Ovary (tissue), 10 donors: ENCODE measurements at regions of chr10 and their contacts with region 1.

Region 1: GRCh38 chr10:115092555-115093285 is 445 bp upstream of the ATRNL1 start:
- DNase-seq: peak in 4 of 5 donors; percentile 60 to 82 (median 75)
- H3K4me3 ChIP-seq: peak overlapping the region; percentile 76
- H3K27ac ChIP-seq: peak overlapping the region; percentile 88 to 99
- H3K4me1 ChIP-seq: no peaks in the 10 kb centered on the region
- H3K27me3 ChIP-seq: no peaks in the 10 kb centered on the region
- CTCF ChIP-seq: no peak
- EP300 ChIP-seq: no peak
- POLR2A ChIP-seq: no peak

Region 2: GRCh38 chr10:114584419-114584818 is 508.3 kb before region 1 on chr10:
- intact Hi-C with region 1: no loop called
- DNase-seq: no peak
- H3K4me3 ChIP-seq: no peak overlapping the region
- H3K27ac ChIP-seq: no peak overlapping the region
- H3K4me1 ChIP-seq: no peaks in the 10 kb centered on the region
- H3K27me3 ChIP-seq: no peaks in the 10 kb centered on the region
- CTCF ChIP-seq: no peak
- EP300 ChIP-seq: no peak
- POLR2A ChIP-seq: no peak

Region 3: DNA sequence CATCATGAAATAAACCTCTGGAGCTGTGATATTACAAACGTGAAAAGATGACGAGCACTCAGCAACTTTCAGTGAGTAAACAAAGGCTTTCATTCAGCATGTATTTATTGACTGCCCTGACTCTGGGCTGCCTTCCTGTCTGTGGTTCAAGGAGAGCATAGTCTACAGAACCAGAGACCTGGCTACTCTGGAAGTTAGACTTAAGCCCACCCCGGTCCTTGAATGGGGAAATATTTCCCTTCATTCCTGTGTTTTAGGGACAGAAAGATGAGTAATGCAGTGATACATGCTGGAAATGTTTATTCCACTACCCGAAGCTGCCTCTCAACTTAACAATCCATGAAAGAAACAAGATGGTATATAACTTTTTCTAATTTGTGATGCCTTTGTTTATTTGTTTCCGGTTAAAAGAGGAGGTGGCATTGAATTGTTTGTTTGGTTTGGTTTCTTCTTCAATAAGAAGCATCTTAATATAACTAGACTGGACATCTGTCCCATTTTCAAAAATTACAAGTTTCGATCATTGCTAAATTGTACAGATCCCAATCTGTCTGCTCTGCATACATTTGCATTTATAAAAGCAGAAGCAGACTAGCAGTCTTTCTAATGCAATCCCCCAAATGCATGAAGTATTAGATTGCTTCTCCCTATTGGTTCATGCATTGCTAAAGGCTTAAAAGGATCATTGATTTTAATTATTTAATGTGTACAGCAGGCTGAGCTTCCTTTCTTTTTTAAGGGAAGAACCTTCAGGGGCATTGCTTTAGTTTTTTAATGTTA is 97.1 kb before region 1 on chr10:
- intact Hi-C with region 1: loop called in 1 of 4 experiments (anchors 10 kb)
- DNase-seq: no peak
- H3K4me3 ChIP-seq: no peak overlapping the region
- H3K27ac ChIP-seq: no peak overlapping the region
- H3K4me1 ChIP-seq: peaks cover 2% of the 10 kb centered on the region
- H3K27me3 ChIP-seq: no peaks in the 10 kb centered on the region
- CTCF ChIP-seq: no peak
- EP300 ChIP-seq: no peak
- POLR2A ChIP-seq: no peak

Region 4: DNA sequence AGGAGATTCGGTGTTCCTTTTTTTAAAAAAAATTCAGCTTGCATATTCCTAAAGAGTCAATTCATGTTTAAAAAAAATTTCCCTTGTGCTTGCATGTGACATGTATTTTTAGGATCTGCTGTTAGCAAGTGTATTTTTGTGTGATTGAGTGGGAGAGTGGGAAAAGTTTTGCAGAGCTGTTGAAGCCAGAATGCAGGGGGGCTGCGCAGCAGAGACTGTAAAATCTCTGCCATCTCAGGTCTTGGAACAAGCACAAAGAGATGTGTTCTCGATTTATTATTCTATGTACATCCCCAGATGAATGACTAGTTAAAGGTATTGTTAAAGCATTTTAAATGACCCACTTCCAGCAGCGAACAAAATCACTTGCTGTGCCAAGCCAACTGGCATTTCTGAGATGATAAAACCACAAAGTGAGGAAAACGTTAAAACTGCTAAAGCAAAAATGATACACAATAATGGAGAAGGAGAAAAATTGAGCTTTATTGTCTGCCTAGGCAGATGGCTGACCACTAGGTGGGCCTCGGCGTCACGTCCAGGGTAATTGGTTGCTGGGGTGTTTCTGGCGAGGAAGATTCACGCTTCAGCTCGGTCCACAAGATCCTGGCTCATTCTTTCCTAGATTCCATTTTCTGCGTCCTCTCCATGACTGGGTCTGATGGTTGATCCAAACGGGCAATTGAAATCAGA is 66.5 kb before region 1 on chr10:
- intact Hi-C with region 1: loop called in 1 of 4 experiments (anchors 10 kb)
- DNase-seq: no peak
- H3K4me3 ChIP-seq: no peak overlapping the region
- H3K27ac ChIP-seq: no peak overlapping the region
- H3K4me1 ChIP-seq: peaks cover 8% of the 10 kb centered on the region
- H3K27me3 ChIP-seq: no peaks in the 10 kb centered on the region
- CTCF ChIP-seq: no peak
- EP300 ChIP-seq: no peak
- POLR2A ChIP-seq: no peak

Region 5: DNA sequence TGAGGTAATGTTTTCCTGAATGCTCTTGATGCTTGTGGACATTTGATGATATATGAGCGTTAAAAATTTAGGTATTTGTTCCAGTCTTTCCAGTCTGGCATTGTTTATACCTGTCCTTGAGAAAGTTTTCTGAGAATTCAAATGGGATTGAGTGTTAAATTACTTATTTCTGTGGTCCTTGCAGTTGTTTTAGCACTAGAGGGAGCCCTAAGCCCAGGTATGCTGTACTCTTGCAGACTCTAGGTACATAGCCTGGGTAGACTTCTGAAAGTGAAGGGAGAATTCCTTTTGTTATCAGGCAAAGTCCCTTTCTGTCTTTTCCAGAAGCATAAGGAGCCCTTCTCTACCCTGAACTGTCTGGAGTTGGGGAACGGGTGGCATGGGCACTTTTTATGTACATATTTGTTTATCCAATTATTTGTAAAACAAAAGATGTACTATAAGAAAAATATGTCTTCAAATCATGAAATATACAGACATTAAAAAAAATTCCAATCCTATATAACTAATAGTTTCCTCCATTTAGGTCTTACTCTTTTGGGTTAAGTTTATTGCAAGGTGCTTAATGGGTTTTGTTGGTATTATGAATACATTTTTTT is 262.5 kb after region 1 on chr10:
- intact Hi-C with region 1: no loop called
- DNase-seq: peak in 1 of 5 donors; percentile 22
- H3K4me3 ChIP-seq: no peak overlapping the region
- H3K27ac ChIP-seq: no peak overlapping the region
- H3K4me1 ChIP-seq: no peaks in the 10 kb centered on the region
- H3K27me3 ChIP-seq: no peaks in the 10 kb centered on the region
- CTCF ChIP-seq: peak in 2 of 3 donors; percentile 13 to 27
- EP300 ChIP-seq: no peak
- POLR2A ChIP-seq: no peak